ENCODE measurements at regions of chr1 and their contacts with region 1.

Region 1: GRCh38 chr1:66242646-66243547 is 291.1 kb upstream of the SGIP1 start:
- DNase-seq: peak; percentile 71
- H3K4me3 ChIP-seq: peak overlapping the region in 1 of 2 experiments; percentile 36; a peak in 1 of 4 replicates
- H3K27ac ChIP-seq: peak overlapping the region; percentile 20 to 91; a peak in 3 of 4 replicates
- H3K4me1 ChIP-seq: peaks cover 39 to 69% of the 10 kb centered on the region in 2 experiments; a peak in 3 of 4 replicates
- H3K27me3 ChIP-seq: no peaks in the 10 kb centered on the region
- CTCF ChIP-seq: peak; percentile 100
- EP300 ChIP-seq: no peak
- RAD21 ChIP-seq: peak; percentile 100

Region 2: DNA sequence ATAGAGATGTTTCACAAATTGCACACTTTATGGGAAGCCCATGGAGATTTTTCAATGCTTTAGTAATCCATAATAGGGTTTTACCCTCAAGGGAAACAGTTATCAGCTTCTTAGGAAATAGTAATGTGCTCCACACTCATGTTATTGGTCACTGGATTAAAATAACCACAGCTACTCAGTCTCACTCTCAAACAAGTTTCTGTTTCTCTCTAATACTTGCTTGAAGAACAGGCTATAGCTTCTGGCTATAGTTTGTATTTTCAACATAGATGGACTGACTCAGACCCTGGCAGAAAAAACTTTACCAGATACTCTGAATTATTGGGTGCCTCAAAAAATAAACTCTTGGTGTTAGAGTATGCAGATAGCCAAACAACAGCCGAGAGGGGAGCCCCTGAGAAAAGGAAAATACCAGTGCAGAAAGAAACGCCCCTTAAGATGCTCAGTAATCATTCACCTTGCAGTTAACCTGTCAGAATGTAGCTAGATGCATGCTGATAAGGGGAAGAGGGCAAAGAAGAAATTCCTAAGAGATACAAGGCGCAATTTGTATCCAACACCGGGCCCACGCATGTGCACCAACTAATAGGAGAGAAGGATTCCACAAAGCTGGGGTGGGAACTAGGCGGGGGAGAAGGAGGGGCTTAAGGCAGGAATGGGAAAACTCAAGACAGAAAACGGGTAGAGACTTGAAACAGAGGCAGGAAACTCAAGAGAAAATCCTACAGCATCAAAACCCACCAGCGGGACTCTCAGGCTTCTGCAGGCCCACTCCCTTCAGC is 480.6 kb before region 1 on chr1:
- CTCF ChIA-PET with region 1: no interaction called
- POLR2A ChIA-PET with region 1: no interaction called
- DNase-seq: no peak
- H3K4me3 ChIP-seq: no peak overlapping the region
- H3K27ac ChIP-seq: no peak overlapping the region
- H3K4me1 ChIP-seq: peaks cover 0 to 3% of the 10 kb centered on the region in 2 experiments; a peak in 1 of 4 replicates
- H3K27me3 ChIP-seq: no peaks in the 10 kb centered on the region
- CTCF ChIP-seq: no peak
- EP300 ChIP-seq: no peak
- RAD21 ChIP-seq: no peak

Region 3: GRCh38 chr1:65952696-65953095 is 290.2 kb before region 1 on chr1:
- CTCF ChIA-PET with region 1: interaction called, 318 read pairs
- POLR2A ChIA-PET with region 1: no interaction called
- DNase-seq: no peak
- H3K4me3 ChIP-seq: no peak overlapping the region
- H3K27ac ChIP-seq: no peak overlapping the region
- H3K4me1 ChIP-seq: no peaks in the 10 kb centered on the region
- H3K27me3 ChIP-seq: no peaks in the 10 kb centered on the region
- CTCF ChIP-seq: no peak
- EP300 ChIP-seq: no peak
- RAD21 ChIP-seq: no peak

Region 4: DNA sequence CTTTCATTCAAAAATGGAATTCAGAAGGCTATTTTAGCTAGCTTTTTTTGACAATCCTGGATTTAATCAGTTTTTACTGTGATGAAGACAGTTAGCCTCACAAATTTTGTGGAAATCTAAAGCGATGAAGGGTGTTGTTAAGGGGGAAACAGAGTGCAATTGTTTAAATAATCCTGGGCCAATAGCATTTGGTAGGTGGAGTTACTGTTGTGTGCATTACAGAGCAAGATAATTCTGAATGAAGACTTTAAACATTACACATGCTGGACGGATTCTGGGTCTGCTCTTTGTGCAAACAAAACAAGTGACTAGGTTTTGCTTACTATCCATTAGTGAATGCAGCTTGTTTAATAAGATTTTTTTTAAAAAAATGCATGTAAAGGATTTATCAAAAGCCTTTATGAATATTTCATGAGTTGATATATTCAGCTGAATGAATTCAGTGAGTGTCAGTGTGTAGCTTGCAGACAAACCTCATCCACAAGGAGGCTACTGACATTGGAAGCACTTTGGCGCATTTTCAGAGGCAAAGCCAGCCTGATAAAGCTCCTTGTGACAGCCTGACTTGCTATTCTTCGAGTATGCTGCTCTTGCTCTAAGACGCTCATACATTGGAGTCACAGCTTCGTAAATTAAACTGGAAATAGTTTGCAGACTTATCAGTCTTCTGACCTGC is 250.6 kb before region 1 on chr1:
- CTCF ChIA-PET with region 1: interaction called, 203 read pairs
- POLR2A ChIA-PET with region 1: interaction called, 8 read pairs
- DNase-seq: peak; percentile 10
- H3K4me3 ChIP-seq: peak overlapping the region; percentile 49 to 56
- H3K27ac ChIP-seq: peak overlapping the region; percentile 8 to 91; a peak in 3 of 4 replicates
- H3K4me1 ChIP-seq: peaks cover 3 to 5% of the 10 kb centered on the region in 2 experiments; a peak in 3 of 4 replicates
- H3K27me3 ChIP-seq: no peaks in the 10 kb centered on the region
- CTCF ChIP-seq: peak; percentile 44
- EP300 ChIP-seq: no peak
- RAD21 ChIP-seq: peak; percentile 45

Region 5: GRCh38 chr1:66182551-66183178 is 60.2 kb before region 1 on chr1:
- CTCF ChIA-PET with region 1: interaction called, 47 read pairs
- POLR2A ChIA-PET with region 1: no interaction called
- DNase-seq: peak; percentile 47
- H3K4me3 ChIP-seq: peak overlapping the region in 1 of 2 experiments; percentile 9; a peak in 1 of 4 replicates
- H3K27ac ChIP-seq: peak overlapping the region; percentile 83 to 97
- H3K4me1 ChIP-seq: peaks cover 14 to 18% of the 10 kb centered on the region in 2 experiments; a peak in 3 of 4 replicates
- H3K27me3 ChIP-seq: no peaks in the 10 kb centered on the region
- CTCF ChIP-seq: no peak
- EP300 ChIP-seq: peak; percentile 68 to 69; a peak in 3 of 4 replicates
- RAD21 ChIP-seq: no peak

Region 6: GRCh38 chr1:66253330-66253921 is 10.5 kb after region 1 on chr1:
- CTCF ChIA-PET with region 1: interaction called, 39 read pairs
- POLR2A ChIA-PET with region 1: no interaction called
- DNase-seq: peak; percentile 50
- H3K4me3 ChIP-seq: no peak overlapping the region
- H3K27ac ChIP-seq: peak overlapping the region in 1 of 2 experiments; percentile 53; a peak in 2 of 4 replicates
- H3K4me1 ChIP-seq: peaks cover 8 to 9% of the 10 kb centered on the region in 2 experiments; a peak in 3 of 4 replicates
- H3K27me3 ChIP-seq: no peaks in the 10 kb centered on the region
- CTCF ChIP-seq: peak; percentile 89
- EP300 ChIP-seq: no peak
- RAD21 ChIP-seq: peak; percentile 100

Region 7: GRCh38 chr1:66480162-66480561 is 237.3 kb after region 1 on chr1:
- CTCF ChIA-PET with region 1: no interaction called
- POLR2A ChIA-PET with region 1: no interaction called
- DNase-seq: peak; percentile 23
- H3K4me3 ChIP-seq: no peak overlapping the region
- H3K27ac ChIP-seq: peak overlapping the region; percentile 71 to 92; a peak in 2 of 4 replicates
- H3K4me1 ChIP-seq: peaks cover 4 to 11% of the 10 kb centered on the region in 2 experiments
- H3K27me3 ChIP-seq: no peaks in the 10 kb centered on the region
- CTCF ChIP-seq: no peak
- EP300 ChIP-seq: no peak
- RAD21 ChIP-seq: no peak

Region 8: DNA sequence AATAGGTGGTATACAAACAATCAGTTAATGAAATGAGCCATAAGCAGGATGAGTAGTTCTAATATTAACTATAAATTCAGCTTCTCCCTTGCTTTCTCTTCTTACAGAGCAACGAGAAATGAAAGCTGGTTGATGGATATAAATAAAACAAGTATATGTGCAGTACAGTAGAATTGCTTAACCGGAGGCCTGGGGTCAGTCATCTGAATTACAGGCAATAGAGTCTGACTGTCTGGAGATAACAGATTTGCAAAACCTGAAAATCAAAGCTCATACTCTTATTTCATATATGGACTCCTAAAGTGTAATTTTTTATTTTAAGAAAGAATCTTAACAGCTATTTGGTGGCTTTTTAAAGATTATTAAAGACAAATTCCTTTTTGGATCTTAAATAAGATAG is 247.9 kb after region 1 on chr1:
- CTCF ChIA-PET with region 1: interaction called, 10 read pairs
- POLR2A ChIA-PET with region 1: no interaction called
- DNase-seq: peak; percentile 39
- H3K4me3 ChIP-seq: peak overlapping the region in 1 of 2 experiments; percentile 33; a peak in 2 of 4 replicates
- H3K27ac ChIP-seq: peak overlapping the region; percentile 95 to 100
- H3K4me1 ChIP-seq: peaks cover 46 to 71% of the 10 kb centered on the region in 2 experiments
- H3K27me3 ChIP-seq: no peaks in the 10 kb centered on the region
- CTCF ChIP-seq: no peak
- EP300 ChIP-seq: peak; percentile 77 to 98
- RAD21 ChIP-seq: peak; percentile 32

Measured in SK-N-SH (cell line).